ENCODE measurements at regions of chr21 and their contacts with region 1.

Region 1: GRCh38 chr21:42337830-42338728 is 12.7 kb downstream of the TFF2 start:
- DNase-seq: peak; percentile 88
- H3K4me3 Mint-ChIP-seq: no peak overlapping the region
- H3K27ac Mint-ChIP-seq: no peak overlapping the region
- H3K4me1 Mint-ChIP-seq: peaks cover 7% of the 10 kb centered on the region
- H3K27me3 Mint-ChIP-seq: peaks cover 40% of the 10 kb centered on the region

Region 2: DNA sequence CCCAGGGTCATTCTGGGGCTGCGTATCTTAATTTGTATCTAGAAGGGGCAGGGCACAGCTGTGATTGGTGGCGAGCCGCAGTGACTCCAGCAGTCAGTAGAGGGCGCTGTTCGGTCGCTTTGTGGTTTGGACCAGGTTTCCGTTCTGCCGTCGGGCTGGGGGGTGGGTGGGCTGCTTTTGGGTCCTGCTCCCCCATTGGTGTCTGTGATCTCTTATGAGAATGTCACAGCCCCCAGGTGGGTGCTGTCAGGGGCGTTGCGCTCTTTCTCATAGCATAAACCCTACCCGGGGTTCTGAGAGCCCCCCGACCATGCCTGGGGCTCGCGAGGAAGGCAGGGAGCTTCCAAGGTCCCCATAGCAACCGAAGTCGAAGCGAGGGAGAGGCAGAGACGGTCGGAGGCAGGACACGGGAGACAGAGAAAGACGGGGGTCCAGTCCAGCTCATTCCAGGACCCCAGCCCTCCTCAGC is 28.3 kb before region 1 on chr21:
- CTCF ChIA-PET with region 1: interaction called, 14 read pairs
- DNase-seq: peak; percentile 84
- H3K4me3 Mint-ChIP-seq: no peak overlapping the region
- H3K27ac Mint-ChIP-seq: no peak overlapping the region
- H3K4me1 Mint-ChIP-seq: peaks cover 11% of the 10 kb centered on the region
- H3K27me3 Mint-ChIP-seq: peaks cover 56% of the 10 kb centered on the region

Region 3: DNA sequence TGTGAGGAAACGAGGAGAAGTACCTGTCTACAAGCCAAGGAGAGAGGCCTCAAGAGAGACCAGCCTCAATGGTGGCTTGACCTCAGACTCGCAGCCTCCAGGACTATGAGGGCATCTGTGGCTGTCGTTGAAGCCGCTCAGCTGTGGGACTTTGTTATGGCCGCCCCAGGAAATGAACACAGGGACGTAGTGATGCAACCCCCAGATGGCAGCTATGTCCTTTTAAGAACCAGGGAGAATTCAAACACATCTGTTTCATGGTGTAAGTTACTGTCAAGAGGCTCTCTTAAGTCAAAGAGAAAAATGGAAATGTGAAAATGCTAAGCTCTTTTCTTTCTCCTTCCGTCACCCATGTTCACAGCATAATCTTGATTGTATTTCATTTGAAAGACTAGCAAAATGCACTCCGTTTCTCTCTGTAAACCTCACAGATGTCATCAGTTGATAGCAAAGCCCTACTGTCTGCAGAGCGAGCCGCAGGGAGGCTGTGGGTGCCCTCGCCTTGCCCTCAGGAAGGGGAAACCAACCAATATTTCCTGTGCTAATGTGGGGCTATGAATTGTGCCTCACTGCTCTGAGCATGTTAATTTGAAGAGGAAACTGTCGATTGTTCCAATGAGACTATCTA is 86.9 kb after region 1 on chr21:
- CTCF ChIA-PET with region 1: interaction called, 13 read pairs
- DNase-seq: peak; percentile 84
- H3K4me3 Mint-ChIP-seq: peak overlapping the region; percentile 55
- H3K27ac Mint-ChIP-seq: peak overlapping the region; percentile 91
- H3K4me1 Mint-ChIP-seq: peaks cover 73% of the 10 kb centered on the region
- H3K27me3 Mint-ChIP-seq: no peaks in the 10 kb centered on the region

Region 4: DNA sequence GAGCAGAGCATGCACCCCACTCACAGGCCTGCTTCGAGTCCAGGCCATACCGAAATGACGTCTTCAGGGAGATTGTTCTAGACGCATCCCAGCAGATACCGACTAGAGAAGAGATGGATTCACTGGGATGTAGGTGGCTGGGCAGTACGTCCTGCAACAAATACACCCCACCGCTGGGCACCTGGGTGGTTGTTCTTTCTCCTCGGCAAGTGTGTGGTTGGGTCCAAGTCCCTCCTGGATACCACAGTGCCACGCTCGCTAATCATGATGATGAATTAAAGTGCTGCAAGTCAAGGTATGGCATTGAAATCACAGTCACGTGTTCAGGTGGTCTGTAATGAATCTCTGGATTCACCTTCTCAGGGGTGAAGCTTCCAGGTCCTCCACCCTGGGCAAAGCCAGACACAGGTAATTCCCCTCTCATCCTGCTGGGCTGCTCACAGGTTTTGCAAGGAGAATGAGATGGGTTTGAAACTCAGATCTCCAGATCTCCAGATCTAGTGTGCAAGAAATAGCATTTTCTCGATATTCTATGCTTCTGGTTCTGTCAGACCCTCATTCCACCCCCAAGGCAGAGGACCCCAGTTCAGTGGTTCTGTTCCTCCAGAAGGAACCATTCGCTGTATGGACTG is 111.3 kb after region 1 on chr21:
- CTCF ChIA-PET with region 1: interaction called, 17 read pairs
- DNase-seq: no peak
- H3K4me3 Mint-ChIP-seq: no peak overlapping the region
- H3K27ac Mint-ChIP-seq: peak overlapping the region; percentile 92
- H3K4me1 Mint-ChIP-seq: peaks cover 33% of the 10 kb centered on the region
- H3K27me3 Mint-ChIP-seq: peaks cover 8% of the 10 kb centered on the region

Measured in activated naive CD4-positive, alpha-beta T cell treated with anti-CD3 and anti-CD28 coated beads, Interleukin-2, amount 10 ng/mL, durations not matched to agents 7 days and 5 days (primary cell).